Adrenal gland (tissue), 19 donors: ENCODE measurements at regions of chr12 and their contacts with region 1.

Region 1: DNA sequence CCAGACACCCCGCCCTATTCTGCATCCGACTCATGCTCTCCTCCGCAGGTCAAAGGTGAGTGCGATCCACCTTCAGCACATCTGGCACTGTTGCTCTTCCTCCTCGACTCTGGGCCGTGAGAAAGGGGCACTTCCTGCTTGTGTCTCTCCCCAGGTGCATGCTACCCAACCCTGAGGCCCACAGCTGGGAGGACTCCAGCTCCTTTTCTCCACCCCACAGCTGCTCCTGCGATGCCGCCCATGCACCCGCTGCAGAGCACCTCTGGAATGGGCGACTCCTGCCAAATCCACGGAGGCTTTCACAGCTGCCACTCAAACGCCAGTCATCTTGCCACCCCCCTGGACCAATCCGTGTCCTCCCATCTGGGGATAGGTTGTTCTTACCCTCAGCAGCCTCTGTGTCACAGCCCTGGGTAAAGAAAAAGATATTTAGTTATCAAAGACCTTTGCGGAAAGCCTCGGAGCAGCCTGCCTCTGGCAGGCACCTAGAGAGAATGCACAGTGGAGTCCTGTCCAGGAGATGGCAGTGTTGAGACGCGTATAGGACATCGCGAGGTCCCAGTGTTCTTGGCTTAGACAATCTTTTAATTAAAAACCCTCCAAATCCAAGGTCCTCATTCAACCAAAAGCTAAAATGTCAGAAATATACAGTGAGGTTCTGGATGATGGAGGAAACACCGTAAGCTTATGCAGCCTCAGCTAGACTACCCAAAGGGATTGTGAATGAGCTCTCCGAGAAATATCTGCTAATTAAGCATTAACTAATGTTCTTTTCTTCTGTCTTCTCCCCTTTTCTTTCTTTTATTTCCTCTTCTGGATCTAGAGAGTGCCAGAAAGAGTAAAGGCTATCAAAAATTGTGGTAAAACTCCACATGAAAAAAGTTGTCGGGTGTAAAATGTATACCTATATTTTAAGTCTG is 54.3 kb downstream of the MYRFL start:
- DNase-seq: peak; percentile 60 to 92 (median 82)
- H3K4me3 ChIP-seq: peak overlapping the region in 1 of 4 donors; percentile 27
- H3K27ac ChIP-seq: no peak overlapping the region
- H3K4me1 ChIP-seq: peaks cover 2 to 9% of the 10 kb centered on the region in 2 donors
- H3K27me3 ChIP-seq: no peaks in the 10 kb centered on the region
- CTCF ChIP-seq: peak; percentile 68 to 91 (median 86)
- POLR2A ChIP-seq: no peak

Region 2: DNA sequence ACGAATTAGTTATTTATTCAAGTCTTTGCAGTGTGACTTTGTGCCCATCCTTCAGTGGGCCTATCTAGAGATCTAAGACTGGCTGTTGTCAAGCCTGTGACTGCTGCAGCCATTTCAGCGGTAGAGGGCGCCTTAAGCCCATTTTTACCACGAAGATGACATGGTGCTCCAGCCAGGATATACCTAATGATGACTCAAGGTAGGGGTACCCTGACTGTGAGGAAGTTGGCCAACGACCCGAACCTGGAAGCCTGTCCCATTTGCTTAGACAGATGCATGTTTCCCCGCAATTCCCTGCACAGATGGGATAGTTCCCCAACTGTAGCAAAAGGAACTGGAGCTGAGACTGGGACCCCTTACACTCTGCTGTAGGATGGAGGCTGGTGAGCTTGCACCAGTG is 99.4 kb before region 1 on chr12:
- intact Hi-C with region 1: loop called in 1 of 2 experiments (anchors 5 kb)
- DNase-seq: peak in 4 of 7 donors; percentile 16 to 37 (median 28)
- H3K4me3 ChIP-seq: no peak overlapping the region
- H3K27ac ChIP-seq: no peak overlapping the region
- H3K4me1 ChIP-seq: no peaks in the 10 kb centered on the region
- H3K27me3 ChIP-seq: no peaks in the 10 kb centered on the region
- CTCF ChIP-seq: peak in 2 of 6 experiments; percentile 20 to 30
- POLR2A ChIP-seq: no peak

Region 3: DNA sequence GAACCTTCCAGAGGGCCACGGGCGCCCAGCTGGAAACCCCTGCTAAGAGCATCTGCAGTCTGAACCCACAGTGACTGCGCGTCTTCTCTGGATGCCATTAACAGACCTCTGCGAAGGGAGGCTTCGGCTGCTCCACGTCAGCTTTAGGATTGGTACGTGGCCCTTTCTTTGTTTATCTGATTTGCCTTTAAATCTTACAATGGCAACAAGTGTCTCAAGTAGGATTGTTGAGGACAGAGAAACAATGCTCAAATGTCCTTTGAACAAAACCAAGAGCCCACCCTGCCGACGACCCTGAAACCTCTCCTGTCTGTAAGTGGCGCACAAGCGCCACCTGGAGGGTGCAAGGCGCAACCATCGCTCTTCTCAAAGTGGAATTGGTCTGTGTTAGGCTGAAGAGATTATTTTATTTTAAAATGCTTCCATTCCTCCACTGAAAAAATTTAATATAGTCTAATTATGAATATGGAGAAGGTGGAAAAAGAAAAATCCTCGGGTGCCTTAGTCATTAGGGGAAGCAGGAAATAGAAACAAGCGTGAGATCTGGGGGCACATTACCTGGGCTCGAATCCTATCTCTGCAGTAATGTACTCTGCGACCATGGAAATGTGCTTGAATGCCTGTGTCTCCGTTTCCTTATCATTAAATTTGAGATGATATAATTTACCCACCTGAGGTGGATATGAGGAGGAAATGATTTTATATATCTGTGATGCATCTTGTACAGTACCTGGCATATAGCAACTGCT is 840.5 kb after region 1 on chr12:
- intact Hi-C with region 1: loop called in 1 of 2 experiments (anchors 5 kb)
- DNase-seq: peak; percentile 20 to 64 (median 33)
- H3K4me3 ChIP-seq: no peak overlapping the region
- H3K27ac ChIP-seq: peak overlapping the region in 2 of 5 donors; percentile 23 to 53
- H3K4me1 ChIP-seq: no peaks in the 10 kb centered on the region
- H3K27me3 ChIP-seq: no peaks in the 10 kb centered on the region
- CTCF ChIP-seq: peak; percentile 61 to 87 (median 78)
- POLR2A ChIP-seq: no peak